Activated CD4-positive, alpha-beta T cell treated with anti-CD3 and anti-CD28 coated beads for 36 hours (primary cell): ENCODE measurements at regions of chr17 and their contacts with region 1.

Region 1: DNA sequence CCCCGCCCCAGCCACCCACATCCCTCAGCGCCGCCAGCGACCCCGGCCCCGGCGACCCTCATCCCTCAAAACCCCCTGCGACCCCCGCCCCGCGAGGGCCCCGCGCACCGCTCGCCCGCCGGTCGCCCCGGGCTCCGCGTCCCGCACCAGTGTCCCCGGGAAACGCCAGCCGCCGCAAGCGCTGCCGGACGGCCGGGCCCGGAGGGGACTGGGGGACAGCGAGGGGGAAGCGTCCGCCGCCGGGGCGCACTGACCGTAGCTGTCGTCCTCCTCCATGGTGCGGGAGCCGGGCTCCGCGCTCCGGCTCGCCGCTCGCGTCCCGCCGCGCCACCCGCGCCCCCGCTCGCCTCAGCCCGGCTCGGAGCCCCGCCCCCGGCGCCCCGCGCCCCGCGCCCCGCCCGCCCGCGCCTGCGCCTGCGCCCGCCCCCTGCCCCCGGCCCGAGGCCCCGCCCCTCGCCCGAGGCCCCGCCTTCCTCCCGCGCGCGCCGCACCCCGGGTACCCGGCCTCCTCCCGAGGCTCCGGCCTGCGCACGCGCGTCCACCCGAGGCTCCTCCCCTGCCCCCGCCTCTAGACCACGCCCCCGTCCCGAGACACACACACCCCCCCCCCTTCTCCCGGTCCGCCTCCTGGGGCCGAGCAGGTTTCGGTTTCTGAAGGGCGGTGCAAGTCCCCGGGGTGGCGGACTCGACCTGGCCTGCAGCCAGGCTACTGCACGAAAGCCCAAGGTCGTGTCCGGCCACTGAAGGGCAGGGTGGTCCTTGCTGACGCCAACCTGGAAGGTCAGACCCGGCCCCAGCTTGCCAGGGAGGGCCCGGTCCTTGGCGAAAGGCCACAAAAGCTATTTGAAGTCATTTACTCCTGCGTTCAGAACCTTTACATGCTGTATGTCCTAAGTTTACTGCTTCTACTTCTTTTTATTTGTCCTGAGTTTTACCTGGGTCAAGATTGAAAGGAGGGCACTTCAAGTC is at the start of gene CYTH1:
- DNase-seq: peak; percentile 98
- ATAC-seq: peak; percentile 73
- H3K4me3 Mint-ChIP-seq: peak within 1 kb of the TSS; percentile 77
- H3K27ac Mint-ChIP-seq: peak within 1 kb of the TSS; percentile 97
- H3K4me1 Mint-ChIP-seq: peaks cover 54% of the 10 kb centered on the region
- H3K27me3 Mint-ChIP-seq: no peaks in the 10 kb centered on the region
- total RNA-seq, gene CYTH1: 109 to 130 TPM

Region 2: GRCh38 chr17:78133971-78134898 is 648.0 kb before region 1 on chr17:
- CTCF ChIA-PET with region 1: no interaction called
- POLR2A ChIA-PET with region 1: no interaction called
- intact Hi-C with region 1: loop called in 1 of 2 experiments (anchors 2 kb)
- DNase-seq: peak; percentile 88
- ATAC-seq: peak; percentile 21
- H3K4me3 Mint-ChIP-seq: peak overlapping the region; percentile 94
- H3K27ac Mint-ChIP-seq: peak overlapping the region; percentile 73
- H3K4me1 Mint-ChIP-seq: peaks cover 72% of the 10 kb centered on the region
- H3K27me3 Mint-ChIP-seq: no peaks in the 10 kb centered on the region

Region 3: GRCh38 chr17:78641243-78641642 is 141.0 kb before region 1 on chr17:
- CTCF ChIA-PET with region 1: no interaction called
- POLR2A ChIA-PET with region 1: no interaction called
- intact Hi-C with region 1: no loop called
- DNase-seq: no peak
- ATAC-seq: no peak
- H3K4me3 Mint-ChIP-seq: no peak overlapping the region
- H3K27ac Mint-ChIP-seq: peak overlapping the region; percentile 19
- H3K4me1 Mint-ChIP-seq: peaks cover 9% of the 10 kb centered on the region
- H3K27me3 Mint-ChIP-seq: no peaks in the 10 kb centered on the region

Region 4: GRCh38 chr17:78689029-78689428 is 93.2 kb before region 1 on chr17:
- CTCF ChIA-PET with region 1: no interaction called
- POLR2A ChIA-PET with region 1: interaction called, 17 read pairs
- intact Hi-C with region 1: no loop called
- DNase-seq: no peak
- ATAC-seq: peak; percentile 23
- H3K4me3 Mint-ChIP-seq: no peak overlapping the region
- H3K27ac Mint-ChIP-seq: no peak overlapping the region
- H3K4me1 Mint-ChIP-seq: peaks cover 4% of the 10 kb centered on the region
- H3K27me3 Mint-ChIP-seq: no peaks in the 10 kb centered on the region

Region 5: GRCh38 chr17:78769196-78769773 is 12.9 kb before region 1 on chr17:
- CTCF ChIA-PET with region 1: interaction called, 12 read pairs
- POLR2A ChIA-PET with region 1: interaction called, 7 read pairs
- intact Hi-C with region 1: no loop called
- DNase-seq: no peak
- ATAC-seq: peak; percentile 35
- H3K4me3 Mint-ChIP-seq: no peak overlapping the region
- H3K27ac Mint-ChIP-seq: no peak overlapping the region
- H3K4me1 Mint-ChIP-seq: peaks cover 45% of the 10 kb centered on the region
- H3K27me3 Mint-ChIP-seq: no peaks in the 10 kb centered on the region

Region 6: GRCh38 chr17:78805301-78805700 is 23.1 kb after region 1 on chr17:
- CTCF ChIA-PET with region 1: interaction called, 3 read pairs
- POLR2A ChIA-PET with region 1: interaction called, 9 read pairs
- intact Hi-C with region 1: loop called (anchors 2 kb)
- DNase-seq: peak; percentile 91
- ATAC-seq: peak; percentile 94
- H3K4me3 Mint-ChIP-seq: peak overlapping the region; percentile 41
- H3K27ac Mint-ChIP-seq: peak overlapping the region; percentile 95
- H3K4me1 Mint-ChIP-seq: peaks cover 57% of the 10 kb centered on the region
- H3K27me3 Mint-ChIP-seq: no peaks in the 10 kb centered on the region

Region 7: DNA sequence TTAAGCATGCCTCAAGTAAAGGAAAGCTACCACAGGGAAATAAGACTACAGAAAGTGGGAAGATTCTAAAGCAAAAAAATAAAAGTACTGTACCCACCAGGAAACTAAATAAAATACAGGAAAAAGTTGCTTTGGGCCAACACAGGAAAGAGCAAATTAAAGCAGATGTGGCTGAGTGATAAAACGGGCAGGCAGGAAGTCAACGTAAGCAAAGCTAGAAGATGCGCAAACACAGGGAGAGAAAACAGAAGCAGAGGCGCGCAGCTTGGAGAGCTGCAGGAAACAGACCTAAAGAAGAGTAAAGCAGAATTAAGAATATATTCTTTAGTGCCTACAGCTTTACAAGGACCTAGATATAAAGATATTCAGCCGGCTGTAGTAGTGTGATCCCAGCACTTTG is 36.7 kb after region 1 on chr17:
- CTCF ChIA-PET with region 1: interaction called, 5 read pairs
- POLR2A ChIA-PET with region 1: no interaction called
- intact Hi-C with region 1: loop called in 1 of 2 experiments (anchors 1 kb)
- DNase-seq: peak; percentile 64
- ATAC-seq: peak; percentile 28
- H3K4me3 Mint-ChIP-seq: peak overlapping the region; percentile 30
- H3K27ac Mint-ChIP-seq: peak overlapping the region; percentile 90
- H3K4me1 Mint-ChIP-seq: peaks cover 66% of the 10 kb centered on the region
- H3K27me3 Mint-ChIP-seq: no peaks in the 10 kb centered on the region

Region 8: GRCh38 chr17:79074650-79075445 is 292.6 kb after region 1 on chr17 and contains the start of gene ENGASE:
- CTCF ChIA-PET with region 1: no interaction called
- POLR2A ChIA-PET with region 1: no interaction called
- intact Hi-C with region 1: loop called in 1 of 2 experiments (anchors 1 kb)
- DNase-seq: peak; percentile 96
- ATAC-seq: peak; percentile 99
- H3K4me3 Mint-ChIP-seq: peak within 1 kb of the TSS; percentile 79
- H3K27ac Mint-ChIP-seq: peak within 1 kb of the TSS; percentile 49
- H3K4me1 Mint-ChIP-seq: peaks cover 14% of the 10 kb centered on the region
- H3K27me3 Mint-ChIP-seq: no peaks in the 10 kb centered on the region
- total RNA-seq, gene ENGASE: 17.3 to 23.7 TPM